Activated CD4-positive, alpha-beta T cell treated with anti-CD3 and anti-CD28 coated beads for 36 hours (primary cell): ENCODE measurements at regions of chr19 and their contacts with region 1.

Region 1: DNA sequence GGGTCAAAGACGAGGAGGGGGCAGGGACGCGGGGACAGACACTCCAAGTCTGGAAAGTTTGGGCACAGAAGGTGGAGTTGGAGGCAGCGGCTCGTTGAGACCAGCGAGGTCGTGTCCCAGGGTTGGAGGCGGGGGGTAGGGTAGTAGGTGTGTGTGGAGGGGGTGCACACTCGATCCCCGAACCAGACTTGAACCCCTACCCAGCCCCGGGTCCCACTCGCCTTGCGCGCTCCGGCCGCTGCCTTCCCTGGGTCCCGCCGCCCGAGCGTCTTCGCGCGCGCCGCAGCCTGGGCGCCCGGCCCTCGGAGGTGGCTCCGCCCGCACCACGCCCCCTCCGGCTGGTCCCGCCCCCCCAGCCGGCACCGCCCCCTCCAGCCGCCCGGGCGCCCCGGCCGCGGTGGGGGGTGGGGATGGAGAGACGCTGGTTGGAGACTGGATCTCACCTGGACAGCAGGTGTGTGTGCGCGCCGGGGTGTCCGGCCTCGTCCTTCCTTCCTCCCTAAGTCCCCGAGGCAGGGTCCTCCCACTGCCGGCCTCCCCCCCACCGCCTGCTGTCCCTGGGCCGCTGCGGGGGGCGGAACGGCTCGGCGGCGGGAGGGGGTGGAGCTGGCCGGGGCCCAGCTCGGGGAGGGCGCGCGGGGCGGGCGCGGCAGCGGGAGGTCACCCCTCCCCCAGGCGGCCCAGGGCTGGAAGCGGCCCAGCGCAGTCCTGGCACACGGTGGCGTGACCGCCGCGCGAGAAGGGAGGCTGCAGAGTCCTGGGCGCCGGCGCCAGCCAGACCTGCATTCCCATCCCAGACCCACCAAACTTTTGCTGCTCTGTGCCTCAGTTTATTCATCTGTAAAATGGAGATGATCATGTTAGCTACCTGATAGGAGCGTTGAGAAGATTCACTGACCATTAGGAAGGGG is at the start of gene KANK2:
- DNase-seq: peak; percentile 88
- ATAC-seq: peak; percentile 92
- H3K4me3 Mint-ChIP-seq: peak within 1 kb of the TSS; percentile 53
- H3K27ac Mint-ChIP-seq: no peak within 1 kb of the TSS
- H3K4me1 Mint-ChIP-seq: peaks cover 7% of the 10 kb centered on the region
- H3K27me3 Mint-ChIP-seq: peaks cover 11% of the 10 kb centered on the region
- total RNA-seq, gene KANK2: 0.91 to 1.2 TPM

Region 2: DNA sequence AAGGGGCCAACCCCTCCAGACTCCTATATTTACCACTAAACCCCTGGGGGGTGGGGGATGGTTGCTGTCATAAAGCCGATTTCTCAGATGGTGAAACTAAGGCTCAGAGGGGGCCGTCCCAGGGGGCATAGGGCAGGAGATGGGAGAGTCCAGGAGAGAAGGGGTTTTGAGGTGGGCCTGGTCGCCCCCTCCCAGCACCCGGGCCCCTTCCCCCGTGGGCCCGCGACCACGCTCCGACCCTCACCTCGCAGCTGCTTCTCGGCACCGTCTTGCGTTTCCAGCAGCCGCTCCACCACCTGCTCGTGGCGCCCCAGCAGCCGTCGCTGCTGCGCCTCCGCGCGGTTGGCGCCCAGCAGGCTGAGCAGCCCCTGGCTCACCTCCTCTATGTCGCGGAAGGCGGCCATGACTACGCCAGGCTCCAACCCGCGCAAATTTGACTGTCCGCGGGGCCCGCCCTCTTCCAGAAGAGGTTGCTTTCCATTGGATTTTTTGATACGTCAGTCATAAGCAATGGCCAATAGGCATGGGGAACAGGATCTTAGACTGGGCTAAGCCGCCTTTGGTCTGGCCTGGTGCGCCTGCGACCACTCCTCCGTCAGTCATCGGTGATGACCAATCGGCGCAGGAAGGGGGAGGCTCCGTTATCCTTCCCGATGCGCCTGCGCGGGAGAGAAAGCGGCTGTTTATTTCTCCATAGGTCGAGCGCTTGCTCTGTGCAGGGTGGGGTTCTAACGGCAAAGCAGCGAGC is 42.0 kb before region 1 on chr19 and contains the start of gene SPC24:
- CTCF ChIA-PET with region 1: no interaction called
- POLR2A ChIA-PET with region 1: no interaction called
- intact Hi-C with region 1: loop called in 1 of 2 experiments (anchors 1 kb)
- DNase-seq: peak; percentile 97
- ATAC-seq: peak; percentile 99
- H3K4me3 Mint-ChIP-seq: peak within 1 kb of the TSS; percentile 79
- H3K27ac Mint-ChIP-seq: peak within 1 kb of the TSS; percentile 80
- H3K4me1 Mint-ChIP-seq: peaks cover 12% of the 10 kb centered on the region
- H3K27me3 Mint-ChIP-seq: no peaks in the 10 kb centered on the region
- total RNA-seq, gene SPC24: 59.6 to 72.2 TPM

Region 3: GRCh38 chr19:11223214-11223613 is 25.7 kb after region 1 on chr19:
- CTCF ChIA-PET with region 1: no interaction called
- POLR2A ChIA-PET with region 1: no interaction called
- intact Hi-C with region 1: no loop called
- DNase-seq: no peak
- ATAC-seq: no peak
- H3K4me3 Mint-ChIP-seq: no peak overlapping the region
- H3K27ac Mint-ChIP-seq: no peak overlapping the region
- H3K4me1 Mint-ChIP-seq: no peaks in the 10 kb centered on the region
- H3K27me3 Mint-ChIP-seq: peaks cover 6% of the 10 kb centered on the region

Region 4: DNA sequence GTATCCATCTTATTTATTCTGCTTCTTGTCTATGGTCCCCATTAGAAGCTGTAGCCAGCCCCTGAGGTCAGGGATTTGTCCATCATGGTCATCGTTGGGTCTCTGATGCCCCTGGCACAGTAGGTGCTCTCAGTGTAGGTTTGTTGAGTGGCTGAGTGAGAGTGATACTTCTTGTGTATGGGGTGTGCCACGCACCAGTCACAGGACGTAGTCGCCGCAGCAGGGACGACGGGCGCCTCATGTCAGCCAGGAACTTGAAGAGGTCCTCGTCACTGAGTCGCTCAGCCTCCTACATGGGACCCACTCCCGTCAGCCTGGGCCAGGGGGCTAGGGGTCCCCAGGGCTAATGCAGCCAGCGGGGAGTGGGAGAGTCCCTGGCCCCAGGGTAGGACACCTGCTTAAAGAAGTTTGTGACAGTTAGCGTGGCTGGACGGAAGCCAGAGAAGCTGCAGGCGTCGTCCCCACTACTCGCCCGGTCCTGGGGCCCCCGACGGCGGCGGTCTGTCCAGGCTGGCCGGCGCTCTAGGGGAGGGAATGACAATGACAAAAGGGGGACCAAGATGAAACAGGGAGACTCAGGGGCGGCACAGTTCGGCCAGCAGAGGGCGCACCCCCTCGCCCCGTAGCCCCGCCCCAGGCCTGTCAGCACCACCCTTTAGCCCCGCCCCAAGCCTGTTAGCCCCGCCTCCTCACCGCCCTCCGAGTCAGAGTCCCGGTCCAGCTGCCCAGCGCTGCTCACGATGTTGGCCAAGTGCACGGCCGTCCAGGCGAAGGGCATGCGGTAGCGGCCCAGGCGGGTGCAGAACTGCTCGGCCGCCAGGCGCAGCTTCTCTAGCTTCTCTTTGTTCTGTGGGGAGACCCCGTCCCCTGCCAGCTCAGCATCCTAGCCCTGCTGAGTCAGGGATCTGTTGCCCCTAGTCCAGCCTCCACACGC is 45.6 kb after region 1 on chr19:
- CTCF ChIA-PET with region 1: interaction called, 3 read pairs
- POLR2A ChIA-PET with region 1: no interaction called
- intact Hi-C with region 1: loop called in 1 of 2 experiments (anchors 1 kb)
- DNase-seq: peak; percentile 95
- ATAC-seq: peak; percentile 100
- H3K4me3 Mint-ChIP-seq: no peak overlapping the region
- H3K27ac Mint-ChIP-seq: no peak overlapping the region
- H3K4me1 Mint-ChIP-seq: peaks cover 5% of the 10 kb centered on the region
- H3K27me3 Mint-ChIP-seq: peaks cover 14% of the 10 kb centered on the region

Region 5: DNA sequence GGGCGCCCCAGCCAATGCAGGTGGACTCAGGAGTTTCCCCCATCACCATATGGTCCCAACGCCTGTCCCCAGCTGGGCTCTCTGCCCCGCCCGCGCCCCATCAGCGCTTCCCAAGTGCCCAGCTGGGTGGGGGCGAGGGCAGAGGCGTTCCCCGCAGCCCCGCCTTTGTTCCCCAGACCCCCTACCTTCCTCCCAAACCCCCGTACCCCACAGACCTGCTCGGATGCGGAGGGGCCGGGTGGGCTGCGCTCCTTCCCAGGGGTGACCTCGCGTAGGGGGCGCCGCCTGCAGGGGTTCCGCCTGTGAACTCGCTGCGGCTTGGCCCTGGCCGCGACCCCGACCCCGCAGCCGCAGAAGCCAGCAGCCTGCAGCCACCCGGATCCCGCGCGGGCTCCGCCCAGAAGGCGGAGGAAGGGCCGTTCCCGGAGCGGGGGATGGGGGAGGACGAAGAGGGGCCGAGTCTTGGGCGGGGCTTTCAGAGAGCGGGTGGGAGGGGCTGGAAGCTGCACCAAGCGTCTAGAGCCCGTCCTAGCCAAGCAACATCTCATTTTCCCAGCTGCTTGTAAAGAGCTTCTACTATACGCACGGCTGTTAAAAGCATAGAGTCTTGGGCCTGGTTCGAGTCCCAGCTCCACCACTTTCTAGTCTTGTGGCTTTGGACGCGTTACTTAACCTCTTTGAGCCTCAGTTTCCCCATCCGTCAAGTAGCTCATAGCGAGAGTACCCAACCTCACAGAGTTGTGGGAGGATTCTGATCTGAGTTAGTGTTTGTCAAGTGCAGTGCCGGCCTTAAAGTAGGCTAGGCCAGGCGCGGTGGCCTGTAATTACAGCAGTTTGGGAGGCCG is 142.0 kb after region 1 on chr19 and contains the start of gene RAB3D:
- CTCF ChIA-PET with region 1: no interaction called
- POLR2A ChIA-PET with region 1: no interaction called
- intact Hi-C with region 1: loop called in 1 of 2 experiments (anchors 5 kb)
- DNase-seq: peak; percentile 93
- ATAC-seq: peak; percentile 99
- H3K4me3 Mint-ChIP-seq: peak within 1 kb of the TSS; percentile 72
- H3K27ac Mint-ChIP-seq: no peak within 1 kb of the TSS
- H3K4me1 Mint-ChIP-seq: peaks cover 23% of the 10 kb centered on the region
- H3K27me3 Mint-ChIP-seq: no peaks in the 10 kb centered on the region
- total RNA-seq, gene RAB3D: 7.5 to 8.9 TPM

Region 6: DNA sequence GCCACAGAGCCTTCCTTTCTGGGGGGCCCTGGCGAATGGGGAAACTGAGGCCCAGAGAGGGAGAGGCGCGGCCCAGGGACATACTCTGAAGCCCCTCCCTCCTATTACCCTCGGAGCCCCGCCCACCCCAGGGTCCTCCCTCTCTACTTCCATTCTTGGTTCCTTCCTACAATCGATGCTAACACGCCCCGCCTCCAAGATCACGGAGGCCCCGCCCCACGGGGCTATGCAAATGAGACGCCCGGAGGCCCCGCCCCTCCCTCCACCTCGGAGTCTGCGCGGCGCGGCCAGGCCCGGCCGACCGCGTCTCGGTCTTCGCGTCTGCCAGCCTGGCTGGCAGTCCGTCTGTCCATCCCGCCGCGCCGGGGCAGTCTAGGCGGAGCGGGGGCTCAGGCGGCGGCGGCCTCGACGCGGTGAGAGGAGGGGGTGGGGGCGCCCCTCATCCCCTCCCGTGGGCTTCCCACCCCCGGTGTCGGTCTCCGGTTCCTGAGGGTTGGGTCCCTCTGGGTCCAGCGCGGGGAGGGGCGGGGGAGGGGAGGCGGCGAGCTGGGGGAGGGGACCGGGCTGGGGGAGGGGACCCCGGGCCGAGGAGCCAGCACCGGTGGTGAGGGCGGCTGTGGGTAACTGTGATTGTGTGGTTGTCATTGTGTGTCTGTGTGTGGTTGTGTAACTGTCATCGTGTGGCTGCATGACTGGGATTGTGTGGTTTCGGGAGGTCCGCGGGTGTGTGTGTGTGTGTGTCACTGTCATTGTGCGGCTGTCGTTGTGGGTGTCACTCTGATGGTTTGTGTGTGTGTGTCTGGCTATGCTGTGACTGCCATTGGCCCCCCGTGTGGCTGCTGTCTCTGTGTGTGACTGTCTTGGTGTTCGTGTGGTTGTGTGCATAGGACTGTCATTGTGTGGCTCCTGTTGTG is 157.9 kb after region 1 on chr19 and contains the start of gene PLPPR2:
- CTCF ChIA-PET with region 1: no interaction called
- POLR2A ChIA-PET with region 1: no interaction called
- intact Hi-C with region 1: loop called in 1 of 2 experiments (anchors 1 kb)
- DNase-seq: peak; percentile 92
- ATAC-seq: peak; percentile 95
- H3K4me3 Mint-ChIP-seq: peak within 1 kb of the TSS; percentile 43
- H3K27ac Mint-ChIP-seq: peak within 1 kb of the TSS; percentile 23
- H3K4me1 Mint-ChIP-seq: peaks cover 7% of the 10 kb centered on the region
- H3K27me3 Mint-ChIP-seq: peaks cover 13% of the 10 kb centered on the region
- total RNA-seq, gene PLPPR2: 2.1 to 2.2 TPM

Region 7: GRCh38 chr19:11374433-11375142 is 177.1 kb after region 1 on chr19 and contains the start of gene SWSAP1:
- CTCF ChIA-PET with region 1: no interaction called
- POLR2A ChIA-PET with region 1: no interaction called
- intact Hi-C with region 1: loop called in 1 of 2 experiments (anchors 1 kb)
- DNase-seq: peak; percentile 98
- ATAC-seq: peak; percentile 92
- H3K4me3 Mint-ChIP-seq: no peak within 1 kb of the TSS
- H3K27ac Mint-ChIP-seq: no peak within 1 kb of the TSS
- H3K4me1 Mint-ChIP-seq: peaks cover 28% of the 10 kb centered on the region
- H3K27me3 Mint-ChIP-seq: no peaks in the 10 kb centered on the region
- total RNA-seq, gene SWSAP1: 1.5 to 1.7 TPM